AG04450 (cell line): ENCODE measurements at regions of chr11 and their contacts with region 1.

Region 1: GRCh38 chr11:125345421-125346178 is 150.5 kb downstream of the FEZ1 start:
- DNase-seq: peak; percentile 50
- H3K4me3 ChIP-seq: no peak overlapping the region
- H3K27ac ChIP-seq: no peak overlapping the region
- H3K27me3 ChIP-seq: no peaks in the 10 kb centered on the region
- CTCF ChIP-seq: peak; percentile 95

Region 2: GRCh38 chr11:124842305-124842704 is 503.3 kb before region 1 on chr11:
- CTCF ChIA-PET with region 1: no interaction called
- POLR2A ChIA-PET with region 1: no interaction called
- DNase-seq: no peak
- H3K4me3 ChIP-seq: no peak overlapping the region
- H3K27ac ChIP-seq: no peak overlapping the region
- H3K27me3 ChIP-seq: peaks cover 87% of the 10 kb centered on the region
- CTCF ChIP-seq: no peak

Region 3: GRCh38 chr11:125001079-125001778 is 344.4 kb before region 1 on chr11:
- CTCF ChIA-PET with region 1: no interaction called
- POLR2A ChIA-PET with region 1: no interaction called
- DNase-seq: no peak
- H3K4me3 ChIP-seq: no peak overlapping the region
- H3K27ac ChIP-seq: no peak overlapping the region
- H3K27me3 ChIP-seq: no peaks in the 10 kb centered on the region
- CTCF ChIP-seq: no peak

Region 4: DNA sequence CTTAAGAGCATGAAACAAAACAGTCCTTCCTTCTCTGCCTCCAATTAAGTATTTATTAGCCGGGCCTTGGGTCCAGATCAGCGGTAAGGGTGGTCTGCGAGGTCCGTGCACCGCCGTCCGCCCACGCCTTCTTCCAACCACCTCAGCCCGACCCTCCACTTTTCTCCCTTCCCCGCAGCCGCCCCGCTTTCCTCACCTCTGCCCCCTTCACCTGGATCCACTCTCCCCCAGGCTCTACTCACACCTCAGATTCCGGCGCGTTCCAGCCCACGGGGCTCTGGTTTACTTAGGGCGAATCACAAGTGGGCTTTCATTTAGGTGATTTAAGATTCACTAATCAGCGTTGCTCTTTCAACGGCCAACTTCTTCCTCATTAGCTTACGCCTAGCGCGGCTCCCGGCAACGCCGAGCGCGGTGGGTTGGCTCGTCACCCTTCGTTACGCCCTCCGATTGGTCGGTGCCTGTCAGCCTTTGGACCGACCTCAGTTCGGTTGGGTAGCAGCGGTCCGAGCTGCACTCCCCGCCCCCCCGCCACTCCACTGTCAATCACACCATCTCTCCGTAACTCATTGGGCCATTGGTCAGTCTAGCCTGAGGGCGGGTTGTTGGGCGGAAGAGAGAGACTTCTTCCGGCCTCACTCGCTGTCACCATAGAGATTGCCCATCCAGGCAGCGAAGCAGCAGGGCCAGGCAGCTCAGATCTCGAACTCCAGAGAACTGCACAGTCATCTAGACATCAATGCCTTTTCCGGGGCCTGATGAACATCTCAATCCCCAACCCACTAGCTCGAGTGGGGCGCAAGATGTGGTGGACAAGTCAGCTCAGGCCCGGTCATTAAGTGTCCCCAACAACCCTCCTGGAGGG is 234.0 kb before region 1 on chr11 and contains the start of gene TMEM218:
- CTCF ChIA-PET with region 1: interaction called, 16 read pairs
- POLR2A ChIA-PET with region 1: no interaction called
- DNase-seq: peak; percentile 99
- H3K4me3 ChIP-seq: peak within 1 kb of the TSS; percentile 93
- H3K27ac ChIP-seq: peak within 1 kb of the TSS; percentile 54
- H3K27me3 ChIP-seq: no peaks in the 10 kb centered on the region
- CTCF ChIP-seq: no peak
- polyA plus RNA-seq, gene TMEM218: 28.4 and 29.9 TPM in 2 replicates

Region 5: GRCh38 chr11:125154378-125155099 is 191.1 kb before region 1 on chr11:
- CTCF ChIA-PET with region 1: interaction called, 13 read pairs
- POLR2A ChIA-PET with region 1: no interaction called
- DNase-seq: no peak
- H3K4me3 ChIP-seq: no peak overlapping the region
- H3K27ac ChIP-seq: no peak overlapping the region
- H3K27me3 ChIP-seq: peaks cover 22% of the 10 kb centered on the region
- CTCF ChIP-seq: no peak

Region 6: GRCh38 chr11:125329786-125330185 is 15.8 kb before region 1 on chr11:
- CTCF ChIA-PET with region 1: interaction called, 10 read pairs
- POLR2A ChIA-PET with region 1: no interaction called
- DNase-seq: no peak
- H3K4me3 ChIP-seq: no peak overlapping the region
- H3K27ac ChIP-seq: no peak overlapping the region
- H3K27me3 ChIP-seq: peaks cover 31% of the 10 kb centered on the region
- CTCF ChIP-seq: no peak

Region 7: DNA sequence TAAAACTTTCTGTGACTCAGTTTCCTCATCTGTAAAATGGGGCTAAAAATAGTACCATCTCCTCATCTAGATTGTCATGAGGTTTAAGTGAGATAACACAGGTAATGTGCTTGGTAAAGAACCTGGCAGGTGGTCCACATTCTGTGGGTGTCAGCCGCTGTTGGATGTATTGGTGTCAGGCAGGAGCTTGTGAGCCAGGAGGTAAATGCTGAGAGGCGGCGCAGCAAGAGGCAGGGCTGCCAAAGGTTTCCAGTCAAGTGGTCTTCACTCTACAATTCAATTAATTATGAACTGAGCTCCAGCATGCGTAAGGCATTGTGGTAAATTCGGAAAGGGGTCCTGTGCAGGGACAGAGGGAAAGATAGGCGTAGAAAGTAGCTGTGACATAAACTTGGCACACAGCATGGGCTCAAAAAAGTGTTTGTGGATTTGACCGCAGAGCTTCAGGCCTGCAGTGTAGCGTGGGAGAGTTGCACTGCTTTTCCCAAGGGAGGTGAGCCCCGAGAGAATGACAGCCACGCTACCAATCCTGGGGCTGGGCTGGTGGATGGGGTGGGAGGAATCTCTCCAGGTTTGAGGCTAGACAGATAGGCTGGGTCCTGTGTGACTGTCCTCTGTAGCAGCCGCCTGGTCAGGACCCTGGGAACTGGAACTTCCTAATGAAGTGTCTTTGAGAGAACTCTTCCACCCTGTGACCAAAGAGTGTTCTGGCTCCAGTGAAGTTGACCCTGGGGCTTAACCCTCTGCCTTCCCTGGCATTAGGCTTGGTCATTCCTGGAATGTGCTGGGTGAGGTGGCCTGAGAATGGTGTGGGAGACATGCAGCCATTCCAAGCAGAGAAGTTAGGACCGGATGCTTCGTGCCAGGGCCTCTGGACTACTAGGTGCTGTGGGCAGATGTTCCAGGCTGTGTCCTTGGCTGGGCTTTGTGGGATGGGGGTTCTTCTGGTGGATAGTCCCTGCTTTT is 28.1 kb after region 1 on chr11:
- CTCF ChIA-PET with region 1: interaction called, 68 read pairs
- POLR2A ChIA-PET with region 1: no interaction called
- DNase-seq: no peak
- H3K4me3 ChIP-seq: no peak overlapping the region
- H3K27ac ChIP-seq: no peak overlapping the region
- H3K27me3 ChIP-seq: peaks cover 9% of the 10 kb centered on the region
- CTCF ChIP-seq: no peak

Region 8: DNA sequence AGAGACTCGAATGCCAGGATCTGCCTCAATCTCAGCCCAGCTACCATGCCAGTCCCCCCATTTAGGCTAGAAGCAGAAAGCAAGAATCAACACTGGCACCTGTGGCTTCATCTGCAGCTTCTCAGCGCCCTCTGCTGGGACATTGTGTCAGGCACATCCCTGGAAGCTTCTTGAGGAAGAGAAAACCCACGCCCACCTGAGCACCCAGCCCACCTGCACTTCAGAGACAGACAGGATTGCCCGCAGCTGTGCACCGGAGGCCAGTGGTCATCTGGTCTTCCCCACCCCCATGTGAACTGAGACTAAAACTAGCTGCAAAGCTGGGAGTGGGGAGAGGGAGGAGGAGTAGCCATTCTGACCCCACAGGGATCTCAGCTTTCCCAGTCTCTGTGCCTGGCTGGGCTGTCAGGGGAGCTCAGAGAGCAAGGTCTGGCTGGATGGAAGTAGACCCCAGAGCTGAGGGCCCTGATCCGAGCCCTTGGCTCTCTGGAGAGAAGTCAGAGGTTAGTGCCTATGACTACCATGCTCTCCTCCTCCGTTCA is 83.6 kb after region 1 on chr11:
- CTCF ChIA-PET with region 1: interaction called, 14 read pairs
- POLR2A ChIA-PET with region 1: no interaction called
- DNase-seq: no peak
- H3K4me3 ChIP-seq: no peak overlapping the region
- H3K27ac ChIP-seq: no peak overlapping the region
- H3K27me3 ChIP-seq: peaks cover 10% of the 10 kb centered on the region
- CTCF ChIP-seq: peak; percentile 79